Common myeloid progenitor, CD34-positive (primary cell): ENCODE measurements at regions of chr22 and their contacts with region 1.

Region 1: DNA sequence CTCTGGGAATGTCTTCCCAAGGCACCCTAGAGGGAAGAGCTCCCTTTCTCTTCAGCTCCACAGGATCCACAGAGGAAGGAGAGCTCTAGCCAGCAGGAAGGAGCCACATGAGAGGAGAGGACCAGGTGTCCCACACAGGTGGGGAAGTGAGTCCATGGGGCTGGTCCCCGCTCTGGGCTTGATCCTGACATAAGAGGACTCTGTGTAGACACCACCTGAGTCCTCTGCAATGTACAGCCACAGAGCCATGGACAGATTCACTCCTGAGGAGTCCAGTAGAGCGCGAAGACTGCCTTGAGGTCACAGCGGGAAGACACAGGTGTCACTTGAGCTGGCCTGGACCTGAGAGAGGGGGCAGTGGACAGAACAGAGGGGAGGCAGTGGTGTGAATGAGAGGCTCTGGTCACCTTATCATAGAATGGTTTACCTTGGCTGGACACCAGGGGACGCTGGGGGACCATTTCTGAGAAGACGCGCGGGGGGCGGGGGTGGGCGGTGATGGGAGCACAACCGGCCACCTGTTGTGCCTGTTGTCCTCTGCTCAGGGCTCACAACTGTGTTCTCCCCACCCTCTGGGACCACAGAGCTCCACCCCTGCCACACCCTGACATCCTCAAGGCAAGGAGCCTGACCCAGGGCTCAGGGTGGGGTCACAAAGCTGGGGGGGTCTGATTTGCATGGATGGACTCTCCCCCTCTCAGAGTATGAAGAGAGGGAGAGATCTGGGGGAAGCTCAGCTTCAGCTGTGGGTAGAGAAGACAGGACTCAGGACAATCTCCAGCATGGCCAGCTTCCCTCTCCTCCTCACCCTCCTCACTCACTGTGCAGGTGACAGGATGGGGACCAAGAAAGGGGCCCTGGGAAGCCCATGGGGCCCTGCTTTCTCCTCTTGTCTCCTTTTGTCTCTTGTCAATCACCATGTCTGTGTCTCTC is 128.2 kb downstream of the ZNF280B start:
- DNase-seq: peak in 2 of 3 donors; percentile 27 to 33
- H3K4me3 ChIP-seq: no peak overlapping the region
- H3K27ac ChIP-seq: no peak overlapping the region
- H3K4me1 ChIP-seq: peaks cover 0 to 9% (median 4%) of the 10 kb centered on the region in 4 experiments
- H3K27me3 ChIP-seq: peaks cover 0 to 24% (median 2%) of the 10 kb centered on the region in 5 experiments

Region 2: GRCh38 chr22:22369964-22370270 is 10.4 kb before region 1 on chr22:
- CTCF ChIA-PET with region 1: interaction called, 15 read pairs
- POLR2A ChIA-PET with region 1: no interaction called
- DNase-seq: peak in 2 of 3 donors; percentile 34 to 47
- H3K4me3 ChIP-seq: no peak overlapping the region
- H3K27ac ChIP-seq: no peak overlapping the region
- H3K4me1 ChIP-seq: peaks cover 15 to 35% (median 25%) of the 10 kb centered on the region in 4 experiments
- H3K27me3 ChIP-seq: no peaks in the 10 kb centered on the region